Left ventricle myocardium inferior (tissue), 1 donor: ENCODE measurements at regions of chr16 and their contacts with region 1.

Region 1: DNA sequence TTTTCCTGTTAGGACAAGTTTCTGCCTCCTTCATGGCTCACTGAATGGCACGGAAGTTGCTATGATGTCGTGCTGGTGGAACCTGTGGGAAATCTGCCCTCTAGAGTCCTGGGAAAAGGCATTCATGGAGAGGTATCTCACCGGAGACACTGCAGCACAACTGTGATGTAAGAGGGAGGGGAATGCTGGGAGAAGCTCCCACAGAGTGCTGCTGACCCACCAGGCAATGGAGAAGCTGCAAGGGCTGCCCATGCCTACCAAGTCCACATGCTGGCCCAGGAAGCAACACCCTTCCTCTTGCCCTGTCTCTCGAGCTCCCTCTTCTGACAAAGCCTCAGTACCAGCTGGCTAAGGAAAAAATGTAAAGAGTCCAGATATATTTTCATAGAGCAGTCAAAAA is 45.2 kb upstream of the SLC5A11 start:
- DNase-seq: no peak
- H3K4me3 ChIP-seq: no peak overlapping the region
- H3K27ac ChIP-seq: no peak overlapping the region
- H3K4me1 ChIP-seq: peaks cover 10% of the 10 kb centered on the region
- H3K27me3 ChIP-seq: no peaks in the 10 kb centered on the region
- CTCF ChIP-seq: peak; percentile 34

Region 2: GRCh38 chr16:24568392-24568791 is 232.2 kb before region 1 on chr16:
- intact Hi-C with region 1: loop called (anchors 10 kb)
- DNase-seq: no peak
- H3K4me3 ChIP-seq: no peak overlapping the region
- H3K27ac ChIP-seq: no peak overlapping the region
- H3K4me1 ChIP-seq: no peaks in the 10 kb centered on the region
- H3K27me3 ChIP-seq: no peaks in the 10 kb centered on the region
- CTCF ChIP-seq: peak; percentile 33